ENCODE measurements at regions of chr17 and their contacts with region 1.

Region 1: GRCh38 chr17:42609182-42609813 is at the starts of genes RETREG3 and TUBG1:
- DNase-seq: peak; percentile 97 to 100 (median 100)
- ATAC-seq: peak; percentile 95
- H3K4me3 ChIP-seq: peak within 1 kb of the TSS; percentile 85
- H3K4me3 Mint-ChIP-seq: peak within 1 kb of the TSS; percentile 95 to 100 (median 100)
- H3K27ac ChIP-seq: peak within 1 kb of the TSS; percentile 89
- H3K27ac Mint-ChIP-seq: peak within 1 kb of the TSS; percentile 94 to 100 (median 97)
- H3K4me1 ChIP-seq: peaks cover 30 to 37% of the 10 kb centered on the region in 2 donors
- H3K4me1 Mint-ChIP-seq: peaks cover 38 to 55% (median 41%) of the 10 kb centered on the region in 7 donors
- H3K27me3 ChIP-seq: no peaks in the 10 kb centered on the region
- H3K27me3 Mint-ChIP-seq: peaks cover 0 to 2% (median 0%) of the 10 kb centered on the region in 5 donors
- total RNA-seq, gene RETREG3: 53.3 to 132 (median 75.7) TPM
- total RNA-seq, gene TUBG1: 7.8 to 54.4 (median 12.5) TPM

Region 2: GRCh38 chr17:42019509-42020404 is 589.5 kb before region 1 on chr17 and contains the start of gene NKIRAS2:
- CTCF ChIA-PET with region 1: no interaction called
- POLR2A ChIA-PET with region 1: no interaction called
- intact Hi-C with region 1: loop called in 1 of 2 experiments (anchors 1 kb)
- DNase-seq: peak; percentile 83 to 97 (median 89)
- ATAC-seq: peak; percentile 88
- H3K4me3 ChIP-seq: peak within 1 kb of the TSS; percentile 85
- H3K4me3 Mint-ChIP-seq: peak within 1 kb of the TSS; percentile 91 to 100 (median 99)
- H3K27ac ChIP-seq: peak within 1 kb of the TSS; percentile 84
- H3K27ac Mint-ChIP-seq: peak within 1 kb of the TSS; percentile 77 to 99 (median 90)
- H3K4me1 ChIP-seq: peaks cover 32 to 37% of the 10 kb centered on the region in 2 donors
- H3K4me1 Mint-ChIP-seq: peaks cover 44 to 69% (median 56%) of the 10 kb centered on the region in 7 donors
- H3K27me3 ChIP-seq: no peaks in the 10 kb centered on the region
- H3K27me3 Mint-ChIP-seq: no peaks in the 10 kb centered on the region
- total RNA-seq, gene NKIRAS2: 14.3 to 24.0 (median 20.4) TPM

Region 3: GRCh38 chr17:42337442-42337841 is 271.9 kb before region 1 on chr17:
- CTCF ChIA-PET with region 1: no interaction called
- POLR2A ChIA-PET with region 1: no interaction called
- intact Hi-C with region 1: no loop called
- DNase-seq: peak; percentile 23 to 87 (median 80)
- ATAC-seq: peak; percentile 92
- H3K4me3 ChIP-seq: no peak overlapping the region
- H3K4me3 Mint-ChIP-seq: peak overlapping the region; percentile 52 to 84 (median 72)
- H3K27ac ChIP-seq: peak overlapping the region; percentile 77
- H3K27ac Mint-ChIP-seq: peak overlapping the region; percentile 85 to 98 (median 93)
- H3K4me1 ChIP-seq: peaks cover 11 to 29% of the 10 kb centered on the region in 2 donors
- H3K4me1 Mint-ChIP-seq: peaks cover 18 to 73% (median 38%) of the 10 kb centered on the region in 7 donors
- H3K27me3 ChIP-seq: no peaks in the 10 kb centered on the region
- H3K27me3 Mint-ChIP-seq: no peaks in the 10 kb centered on the region

Region 4: DNA sequence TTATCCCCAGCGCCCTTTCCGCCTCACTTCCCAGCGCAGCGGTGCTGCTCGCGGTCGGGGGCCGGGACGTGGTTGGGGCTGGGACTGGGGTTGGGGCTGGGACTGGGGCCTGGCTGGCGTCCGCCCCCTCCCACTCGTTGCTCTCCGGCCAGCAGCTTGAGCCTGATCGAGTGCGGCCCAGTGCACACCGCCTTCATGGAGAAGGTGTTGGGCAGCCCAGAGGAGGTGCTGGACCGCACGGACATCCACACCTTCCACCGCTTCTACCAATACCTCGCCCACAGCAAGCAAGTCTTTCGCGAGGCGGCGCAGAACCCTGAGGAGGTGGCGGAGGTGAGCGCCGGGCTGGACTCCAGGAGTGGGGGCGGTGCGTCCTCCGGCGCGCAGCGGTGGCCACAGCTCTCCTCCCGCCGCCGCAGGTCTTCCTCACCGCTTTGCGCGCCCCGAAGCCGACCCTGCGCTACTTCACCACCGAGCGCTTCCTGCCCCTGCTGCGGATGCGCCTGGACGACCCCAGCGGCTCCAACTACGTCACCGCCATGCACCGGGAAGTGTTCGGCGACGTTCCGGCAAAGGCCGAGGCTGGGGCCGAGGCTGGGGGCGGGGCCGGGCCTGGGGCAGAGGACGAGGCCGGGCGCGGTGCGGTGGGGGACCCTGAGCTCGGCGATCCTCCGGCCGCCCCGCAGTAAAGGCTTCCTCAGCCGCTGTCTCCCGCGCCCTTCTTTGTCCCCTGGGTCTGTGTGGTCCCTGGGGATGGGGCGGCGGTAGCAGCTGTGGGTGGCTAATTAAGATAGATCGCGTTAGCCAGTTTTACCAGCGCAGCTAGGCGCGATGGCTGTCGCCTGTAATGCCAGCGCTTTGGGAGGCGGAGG is 54.8 kb before region 1 on chr17:
- CTCF ChIA-PET with region 1: no interaction called
- POLR2A ChIA-PET with region 1: no interaction called
- intact Hi-C with region 1: loop called in 1 of 2 experiments (anchors 2 kb)
- DNase-seq: peak; percentile 47 to 84 (median 68)
- ATAC-seq: peak; percentile 90
- H3K4me3 ChIP-seq: peak overlapping the region; percentile 80
- H3K4me3 Mint-ChIP-seq: peak overlapping the region; percentile 84 to 95 (median 90)
- H3K27ac ChIP-seq: peak overlapping the region; percentile 86
- H3K27ac Mint-ChIP-seq: peak overlapping the region; percentile 80 to 94 (median 91)
- H3K4me1 ChIP-seq: peaks cover 14 to 15% of the 10 kb centered on the region in 2 donors
- H3K4me1 Mint-ChIP-seq: peaks cover 8 to 44% (median 25%) of the 10 kb centered on the region in 7 donors
- H3K27me3 ChIP-seq: no peaks in the 10 kb centered on the region
- H3K27me3 Mint-ChIP-seq: no peaks in the 10 kb centered on the region

Region 5: GRCh38 chr17:42659079-42659931 is 50.0 kb after region 1 on chr17 and contains the start of gene TUBG2:
- CTCF ChIA-PET with region 1: no interaction called
- POLR2A ChIA-PET with region 1: interaction called, 7 read pairs
- intact Hi-C with region 1: loop called in 1 of 2 experiments (anchors 1 kb)
- DNase-seq: peak; percentile 46 to 84 (median 56)
- ATAC-seq: peak; percentile 82
- H3K4me3 ChIP-seq: peak within 1 kb of the TSS; percentile 92
- H3K4me3 Mint-ChIP-seq: peak within 1 kb of the TSS; percentile 88 to 95 (median 90)
- H3K27ac ChIP-seq: peak within 1 kb of the TSS; percentile 62
- H3K27ac Mint-ChIP-seq: peak within 1 kb of the TSS; percentile 57 to 91 (median 79)
- H3K4me1 ChIP-seq: peaks cover 0 to 3% of the 10 kb centered on the region in 2 donors
- H3K4me1 Mint-ChIP-seq: peaks cover 13 to 23% (median 19%) of the 10 kb centered on the region in 7 donors
- H3K27me3 ChIP-seq: no peaks in the 10 kb centered on the region
- H3K27me3 Mint-ChIP-seq: peaks cover 0 to 12% (median 6%) of the 10 kb centered on the region in 5 donors
- total RNA-seq, gene TUBG2: 9.0 to 20.3 (median 15.3) TPM

Region 6: DNA sequence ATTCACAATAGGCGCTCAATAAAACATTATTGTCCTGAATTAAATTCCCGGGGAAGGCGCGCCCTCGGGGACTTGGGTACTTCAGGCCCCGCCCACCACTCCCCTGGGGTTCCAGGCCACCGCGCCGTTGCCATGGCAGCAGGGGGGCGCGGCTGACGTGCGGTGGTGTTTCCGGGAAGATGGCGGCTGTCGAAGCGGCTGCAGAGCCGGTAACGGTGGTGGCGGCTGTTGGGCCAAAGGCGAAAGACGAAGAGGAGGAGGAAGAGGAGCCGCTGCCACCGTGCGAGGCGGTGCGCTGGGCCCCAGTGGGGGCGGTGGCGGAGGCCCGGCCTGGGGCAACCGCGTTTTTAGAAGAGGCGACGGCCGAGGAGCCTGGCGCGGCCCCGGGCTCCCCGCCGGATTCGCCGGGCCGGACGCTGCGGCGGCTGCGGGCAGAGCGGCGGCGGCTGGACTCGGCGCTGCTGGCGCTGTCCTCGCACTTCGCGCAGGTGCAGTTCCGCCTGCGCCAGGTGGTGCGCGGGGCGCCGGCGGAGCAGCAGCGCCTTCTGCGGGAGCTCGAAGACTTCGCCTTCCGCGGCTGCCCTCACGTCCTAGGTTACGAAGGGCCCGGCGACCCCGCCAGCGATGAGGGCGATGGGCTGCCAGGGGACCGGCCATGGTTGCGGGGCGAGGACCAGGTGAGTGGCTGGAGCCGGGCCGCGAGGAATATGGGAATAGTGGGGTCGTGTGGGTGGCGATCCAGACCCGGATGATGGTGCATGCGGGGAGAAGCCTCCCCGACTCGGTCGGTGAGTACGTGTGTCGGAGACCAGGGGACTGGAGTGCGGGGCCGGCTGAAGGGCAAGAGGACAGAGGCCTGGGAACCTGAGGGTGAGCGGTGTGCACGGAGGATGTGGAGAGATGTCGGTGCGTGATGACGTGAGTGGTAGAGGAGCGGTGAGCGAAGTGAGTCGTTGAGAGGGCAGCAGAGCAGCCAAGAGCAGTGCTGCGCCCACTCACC is 371.4 kb after region 1 on chr17 and contains the start of gene RUNDC1:
- CTCF ChIA-PET with region 1: no interaction called
- POLR2A ChIA-PET with region 1: no interaction called
- intact Hi-C with region 1: loop called in 1 of 2 experiments (anchors 2 kb)
- DNase-seq: peak; percentile 81 to 93 (median 87)
- ATAC-seq: peak; percentile 93
- H3K4me3 ChIP-seq: peak within 1 kb of the TSS; percentile 81
- H3K4me3 Mint-ChIP-seq: peak within 1 kb of the TSS; percentile 96 to 99 (median 98)
- H3K27ac ChIP-seq: peak within 1 kb of the TSS; percentile 84
- H3K27ac Mint-ChIP-seq: peak within 1 kb of the TSS; percentile 83 to 98 (median 94)
- H3K4me1 ChIP-seq: peaks cover 4 to 16% of the 10 kb centered on the region in 2 donors
- H3K4me1 Mint-ChIP-seq: peaks cover 25 to 42% (median 38%) of the 10 kb centered on the region in 7 donors
- H3K27me3 ChIP-seq: no peaks in the 10 kb centered on the region
- H3K27me3 Mint-ChIP-seq: no peaks in the 10 kb centered on the region
- total RNA-seq, gene RUNDC1: 12.2 to 21.4 (median 19.4) TPM

Region 7: GRCh38 chr17:43483674-43484372 is 874.5 kb after region 1 on chr17 and contains the start of gene DHX8:
- CTCF ChIA-PET with region 1: no interaction called
- POLR2A ChIA-PET with region 1: no interaction called
- intact Hi-C with region 1: loop called in 1 of 2 experiments (anchors 2 kb)
- DNase-seq: peak; percentile 96 to 100 (median 99)
- ATAC-seq: peak; percentile 99
- H3K4me3 ChIP-seq: peak within 1 kb of the TSS; percentile 90
- H3K4me3 Mint-ChIP-seq: peak within 1 kb of the TSS; percentile 98 to 100 (median 100)
- H3K27ac ChIP-seq: peak within 1 kb of the TSS; percentile 87
- H3K27ac Mint-ChIP-seq: peak within 1 kb of the TSS; percentile 91 to 100 (median 98)
- H3K4me1 ChIP-seq: peaks cover 21 to 29% of the 10 kb centered on the region in 2 donors
- H3K4me1 Mint-ChIP-seq: peaks cover 19 to 52% (median 36%) of the 10 kb centered on the region in 7 donors
- H3K27me3 ChIP-seq: no peaks in the 10 kb centered on the region
- H3K27me3 Mint-ChIP-seq: no peaks in the 10 kb centered on the region
- total RNA-seq, gene DHX8: 67.7 to 93.4 (median 77.8) TPM